A549 (cell line): ENCODE measurements at regions of chr1 and their contacts with region 1.

Region 1: DNA sequence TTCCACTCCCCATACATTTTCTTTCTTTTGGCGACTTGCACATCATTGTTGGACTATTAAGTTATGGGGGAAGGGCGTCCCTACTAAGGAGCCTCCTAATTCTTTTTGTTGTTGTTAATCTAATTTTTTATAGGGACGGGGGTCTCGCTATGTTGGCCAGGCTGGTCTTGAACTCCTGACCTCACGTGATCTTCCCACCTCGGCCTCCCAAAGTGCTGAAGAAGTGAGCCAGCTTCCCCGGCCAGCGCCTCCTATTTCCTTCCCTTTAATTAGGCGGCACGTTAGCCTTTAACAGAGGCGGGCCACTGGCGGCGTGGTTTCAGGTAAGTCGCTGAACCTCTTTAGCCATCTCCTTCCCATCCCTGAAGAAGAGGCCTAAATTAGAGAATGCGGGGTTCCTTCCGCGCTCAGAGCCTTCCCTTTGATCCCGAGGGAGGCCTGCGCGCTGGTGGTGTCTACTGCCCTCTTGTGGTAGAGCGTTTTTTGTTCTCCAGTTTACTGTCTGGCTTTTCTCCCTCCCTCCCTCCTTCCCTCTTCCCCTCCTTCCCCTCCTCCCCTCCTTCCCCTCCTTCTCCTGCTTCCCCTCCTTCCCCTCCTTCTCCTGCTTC is 38.1 kb downstream of the TNFRSF9 start:
- DNase-seq: peak; percentile 70 to 71
- ATAC-seq: peak; percentile 93 to 98
- H3K4me3 ChIP-seq: no peak overlapping the region
- H3K27ac ChIP-seq: peak overlapping the region; percentile 42 to 45; a peak in 2 of 6 replicates
- H3K4me1 ChIP-seq: no peaks in the 10 kb centered on the region
- CTCF ChIP-seq: peak; percentile 62
- EP300 ChIP-seq: no peak
- POLR2A ChIP-seq: no peak
- RAD21 ChIP-seq: peak; percentile 77 to 81

Region 2: GRCh38 chr1:7808253-7808844 is 94.2 kb before region 1 on chr1:
- CTCF ChIA-PET with region 1: interaction called, 12 read pairs
- POLR2A ChIA-PET with region 1: no interaction called
- DNase-seq: peak in 1 of 2 experiments; percentile 44
- ATAC-seq: peak; percentile 62 to 63; a peak in 3 of 6 replicates
- H3K4me3 ChIP-seq: no peak overlapping the region
- H3K27ac ChIP-seq: no peak overlapping the region
- H3K4me1 ChIP-seq: no peaks in the 10 kb centered on the region
- CTCF ChIP-seq: peak; percentile 52
- EP300 ChIP-seq: no peak
- POLR2A ChIP-seq: no peak
- RAD21 ChIP-seq: peak; percentile 60 to 62

Region 3: GRCh38 chr1:7942214-7942921 is 39.8 kb after region 1 on chr1:
- CTCF ChIA-PET with region 1: no interaction called
- POLR2A ChIA-PET with region 1: no interaction called
- DNase-seq: no peak
- ATAC-seq: no peak
- H3K4me3 ChIP-seq: no peak overlapping the region
- H3K27ac ChIP-seq: peak overlapping the region in 1 of 2 experiments; percentile 48; a peak in 2 of 6 replicates
- H3K4me1 ChIP-seq: peaks cover 24% of the 10 kb centered on the region
- CTCF ChIP-seq: no peak
- EP300 ChIP-seq: no peak
- POLR2A ChIP-seq: no peak
- RAD21 ChIP-seq: no peak

Region 4: GRCh38 chr1:7961216-7962015 is 58.8 kb after region 1 on chr1 and contains the start of gene PARK7:
- CTCF ChIA-PET with region 1: no interaction called
- POLR2A ChIA-PET with region 1: no interaction called
- DNase-seq: peak; percentile 91 to 99
- ATAC-seq: peak; percentile 98 to 99
- H3K4me3 ChIP-seq: peak within 1 kb of the TSS; percentile 96
- H3K27ac ChIP-seq: peak within 1 kb of the TSS; percentile 97 to 99
- H3K4me1 ChIP-seq: peaks cover 10% of the 10 kb centered on the region; the same call in 1 of the 3 replicates
- CTCF ChIP-seq: peak; percentile 32
- EP300 ChIP-seq: no peak; a peak in 1 of 5 replicates
- POLR2A ChIP-seq: peak; percentile 89
- RAD21 ChIP-seq: no peak; a peak in 1 of 5 replicates
- polyA plus RNA-seq, gene PARK7: 317 and 446 TPM in 2 replicates